Vagina (tissue), 2 donors: ENCODE measurements at regions of chr16 and their contacts with region 1.

Region 1: DNA sequence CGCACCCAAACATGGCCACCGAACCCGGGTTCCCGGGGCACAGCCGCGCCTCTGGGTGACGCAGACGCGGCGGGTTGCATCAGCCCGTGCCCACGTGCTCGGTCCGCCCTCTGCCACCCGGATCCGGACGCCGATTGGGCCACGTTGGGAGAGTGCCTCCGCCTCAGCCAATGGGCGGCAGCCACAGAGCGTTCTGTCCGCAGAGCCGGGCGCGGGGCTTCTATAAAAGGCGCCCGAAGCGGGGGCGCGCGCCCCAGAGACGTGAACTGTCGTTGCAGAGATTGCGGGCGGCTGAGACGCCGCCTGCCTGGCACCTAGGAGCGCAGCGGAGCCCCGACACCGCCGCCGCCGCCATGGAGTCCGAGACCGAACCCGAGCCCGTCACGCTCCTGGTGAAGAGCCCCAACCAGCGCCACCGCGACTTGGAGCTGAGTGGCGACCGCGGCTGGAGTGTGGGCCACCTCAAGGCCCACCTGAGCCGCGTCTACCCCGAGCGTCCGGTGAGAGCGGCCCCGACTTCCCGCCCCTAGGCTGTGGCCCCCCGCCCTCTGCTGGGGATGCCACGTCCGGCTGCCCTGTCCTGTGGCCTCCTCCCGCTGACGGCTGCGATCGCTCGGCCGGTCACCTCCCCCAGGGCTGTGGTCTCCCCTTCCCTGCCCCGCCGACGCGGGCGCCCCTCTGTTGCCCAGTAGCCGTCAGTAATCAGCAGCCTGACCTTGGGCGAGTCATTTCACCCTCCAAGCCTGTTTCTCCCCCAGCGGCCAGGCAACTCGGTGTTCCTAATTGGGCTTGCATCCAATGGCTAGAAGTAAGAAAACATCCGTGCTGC is at the start of gene HERPUD1:
- DNase-seq: peak; percentile 98 to 99
- H3K4me3 ChIP-seq: peak within 1 kb of the TSS; percentile 82 to 96
- H3K27ac ChIP-seq: peak within 1 kb of the TSS; percentile 100
- H3K4me1 ChIP-seq: peaks cover 43% of the 10 kb centered on the region
- H3K27me3 ChIP-seq: no peaks in the 10 kb centered on the region
- CTCF ChIP-seq: no peak
- POLR2A ChIP-seq: peak; percentile 32 to 66
- total RNA-seq, gene HERPUD1: 97.7 TPM

Region 2: GRCh38 chr16:56866943-56867830 is 64.9 kb before region 1 on chr16:
- intact Hi-C with region 1: loop called (anchors 10 kb)
- DNase-seq: no peak
- H3K4me3 ChIP-seq: no peak overlapping the region
- H3K27ac ChIP-seq: no peak overlapping the region
- H3K4me1 ChIP-seq: no peaks in the 10 kb centered on the region
- H3K27me3 ChIP-seq: no peaks in the 10 kb centered on the region
- CTCF ChIP-seq: peak; percentile 70 to 75 (median 73)
- POLR2A ChIP-seq: no peak

Region 3: GRCh38 chr16:56988948-56989945 is 57.1 kb after region 1 on chr16 and contains the start of gene NLRC5:
- intact Hi-C with region 1: loop called (anchors 5 kb)
- DNase-seq: no peak
- H3K4me3 ChIP-seq: peak within 1 kb of the TSS; percentile 51 to 80
- H3K27ac ChIP-seq: peak within 1 kb of the TSS; percentile 93
- H3K4me1 ChIP-seq: peaks cover 68% of the 10 kb centered on the region
- H3K27me3 ChIP-seq: no peaks in the 10 kb centered on the region
- CTCF ChIP-seq: no peak
- POLR2A ChIP-seq: peak; percentile 61 to 80
- total RNA-seq, gene NLRC5: 114 TPM